Endothelial cell of umbilical vein (primary cell): ENCODE measurements at regions of chr9 and their contacts with region 1.

Region 1: GRCh38 chr9:122810306-122810946 is 10.5 kb downstream of the OR1K1 start:
- DNase-seq: peak; percentile 87
- H3K4me3 ChIP-seq: no peak overlapping the region
- H3K27ac ChIP-seq: no peak overlapping the region
- H3K4me1 ChIP-seq: peaks cover 10% of the 10 kb centered on the region
- H3K27me3 ChIP-seq: no peaks in the 10 kb centered on the region
- CTCF ChIP-seq: peak; percentile 45 to 79
- POLR2A ChIP-seq: no peak

Region 2: DNA sequence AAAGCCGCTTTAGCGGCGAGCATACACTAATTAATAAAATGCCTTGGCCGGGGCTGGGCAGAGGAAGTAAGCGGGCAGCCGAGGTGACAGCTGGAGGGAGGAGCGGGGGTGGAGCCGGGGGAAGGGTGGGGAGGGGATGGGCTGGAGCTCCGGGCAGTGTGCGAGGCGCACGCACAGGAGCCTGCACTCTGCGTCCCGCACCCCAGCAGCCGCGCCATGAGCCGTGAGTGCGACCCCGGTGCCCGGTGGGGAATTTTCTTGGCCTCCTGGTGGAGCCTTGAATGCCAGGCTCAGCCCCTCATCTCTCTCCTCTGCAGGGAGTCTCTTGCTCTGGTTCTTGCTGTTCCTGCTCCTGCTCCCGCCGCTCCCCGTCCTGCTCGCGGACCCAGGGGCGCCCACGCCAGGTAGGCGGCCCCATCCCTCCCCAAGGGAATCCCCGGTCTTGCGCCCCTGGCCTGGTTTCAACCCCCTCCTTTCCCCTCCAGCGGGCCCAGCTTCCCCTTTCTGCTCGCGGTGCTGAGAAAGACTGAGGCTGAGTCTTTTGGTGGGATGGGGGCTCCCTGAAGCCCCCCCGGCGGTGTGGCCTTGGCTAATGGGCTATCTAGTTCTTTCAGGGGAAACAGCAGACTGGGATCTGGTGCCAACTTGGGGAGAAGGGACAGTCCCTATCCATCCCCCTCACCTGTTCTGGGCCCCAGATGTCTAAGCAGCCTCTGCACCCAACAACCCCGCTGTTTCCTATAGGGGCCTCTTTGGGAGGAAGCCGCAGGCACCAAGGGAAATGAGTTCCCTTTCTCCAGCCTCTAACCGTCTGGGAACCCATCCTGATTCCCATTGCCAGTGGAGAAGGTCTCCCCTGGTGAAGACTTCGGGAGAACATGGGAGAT is 439.3 kb before region 1 on chr9 and contains the start of gene PTGS1:
- CTCF ChIA-PET with region 1: no interaction called
- POLR2A ChIA-PET with region 1: no interaction called
- dilution Hi-C with region 1: no loop called
- intact Hi-C with region 1: loop called (anchors 5 kb)
- DNase-seq: peak; percentile 43
- H3K4me3 ChIP-seq: peak within 1 kb of the TSS; percentile 42 to 49 (median 48)
- H3K27ac ChIP-seq: no peak within 1 kb of the TSS
- H3K4me1 ChIP-seq: peaks cover 22% of the 10 kb centered on the region
- H3K27me3 ChIP-seq: no peaks in the 10 kb centered on the region
- CTCF ChIP-seq: no peak
- POLR2A ChIP-seq: peak; percentile 50
- total RNA-seq, gene PTGS1: 14.6 and 45.2 TPM in 2 replicates

Region 3: GRCh38 chr9:122453677-122454135 is 356.7 kb before region 1 on chr9:
- CTCF ChIA-PET with region 1: interaction called, 10 read pairs
- POLR2A ChIA-PET with region 1: interaction called, 7 read pairs
- dilution Hi-C with region 1: no loop called
- intact Hi-C with region 1: no loop called
- DNase-seq: peak; percentile 27
- H3K4me3 ChIP-seq: no peak overlapping the region
- H3K27ac ChIP-seq: no peak overlapping the region
- H3K4me1 ChIP-seq: peaks cover 6% of the 10 kb centered on the region
- H3K27me3 ChIP-seq: peaks cover 2 to 7% of the 10 kb centered on the region in 2 experiments
- CTCF ChIP-seq: no peak
- POLR2A ChIP-seq: no peak

Region 4: GRCh38 chr9:122464633-122465567 is 345.5 kb before region 1 on chr9:
- CTCF ChIA-PET with region 1: interaction called, 97 read pairs
- POLR2A ChIA-PET with region 1: interaction called, 3 read pairs
- dilution Hi-C with region 1: no loop called
- intact Hi-C with region 1: loop called (anchors 1 kb)
- DNase-seq: peak; percentile 96
- H3K4me3 ChIP-seq: peak overlapping the region; percentile 24 to 96 (median 89)
- H3K27ac ChIP-seq: peak overlapping the region; percentile 26
- H3K4me1 ChIP-seq: peaks cover 7% of the 10 kb centered on the region
- H3K27me3 ChIP-seq: peaks cover 6 to 38% of the 10 kb centered on the region in 2 experiments
- CTCF ChIP-seq: peak; percentile 73 to 92
- POLR2A ChIP-seq: no peak

Region 5: DNA sequence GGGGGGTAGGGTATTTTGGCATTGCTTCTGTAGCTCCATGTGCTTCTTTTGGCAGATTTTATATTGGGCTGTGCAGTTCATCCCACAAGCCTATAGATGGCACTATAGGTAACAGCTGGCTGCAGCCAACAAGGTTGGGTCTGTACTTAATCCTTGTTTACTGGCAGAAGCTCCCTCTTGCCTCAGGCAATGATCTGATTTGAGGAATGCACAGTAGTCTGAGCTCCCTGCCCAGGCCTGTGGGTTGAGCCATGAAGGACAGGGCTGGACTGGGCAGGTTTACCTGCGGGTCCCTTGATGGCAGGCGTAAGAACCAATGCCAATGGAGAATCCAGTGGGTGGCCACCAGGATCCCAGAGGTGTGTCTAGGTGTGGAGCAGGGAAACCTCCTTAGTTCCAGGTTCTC is 311.5 kb before region 1 on chr9:
- CTCF ChIA-PET with region 1: interaction called, 52 read pairs
- POLR2A ChIA-PET with region 1: no interaction called
- dilution Hi-C with region 1: no loop called
- intact Hi-C with region 1: loop called (anchors 1 kb)
- DNase-seq: peak; percentile 56
- H3K4me3 ChIP-seq: no peak overlapping the region
- H3K27ac ChIP-seq: no peak overlapping the region
- H3K4me1 ChIP-seq: no peaks in the 10 kb centered on the region
- H3K27me3 ChIP-seq: peaks cover 4 to 31% of the 10 kb centered on the region in 2 experiments
- CTCF ChIP-seq: peak; percentile 80 to 85
- POLR2A ChIP-seq: no peak